ENCODE measurements at regions of chr15 and their contacts with region 1.

Region 1: GRCh38 chr15:51380999-51381795 is 39.7 kb downstream of the GLDN start:
- DNase-seq: peak; percentile 87
- H3K4me3 Mint-ChIP-seq: no peak overlapping the region
- H3K27ac Mint-ChIP-seq: no peak overlapping the region
- H3K4me1 Mint-ChIP-seq: peaks cover 13% of the 10 kb centered on the region
- H3K27me3 Mint-ChIP-seq: no peaks in the 10 kb centered on the region
- CTCF ChIP-seq: peak; percentile 82

Region 2: GRCh38 chr15:50908210-50909009 is 472.8 kb before region 1 on chr15 and contains the start of gene AP4E1:
- CTCF ChIA-PET with region 1: interaction called, 3 read pairs
- POLR2A ChIA-PET with region 1: no interaction called
- intact Hi-C with region 1: loop called (anchors 10 kb)
- DNase-seq: peak; percentile 91
- H3K4me3 Mint-ChIP-seq: peak within 1 kb of the TSS; percentile 81
- H3K27ac Mint-ChIP-seq: peak within 1 kb of the TSS; percentile 81
- H3K4me1 Mint-ChIP-seq: no peaks in the 10 kb centered on the region
- H3K27me3 Mint-ChIP-seq: no peaks in the 10 kb centered on the region
- CTCF ChIP-seq: peak; percentile 97
- total RNA-seq, gene AP4E1: 25.5 and 28.2 TPM in 2 replicates

Region 3: GRCh38 chr15:51203797-51204196 is 177.4 kb before region 1 on chr15:
- CTCF ChIA-PET with region 1: interaction called, 10 read pairs
- POLR2A ChIA-PET with region 1: no interaction called
- intact Hi-C with region 1: no loop called
- DNase-seq: peak; percentile 78
- H3K4me3 Mint-ChIP-seq: no peak overlapping the region
- H3K27ac Mint-ChIP-seq: no peak overlapping the region
- H3K4me1 Mint-ChIP-seq: peaks cover 19% of the 10 kb centered on the region
- H3K27me3 Mint-ChIP-seq: no peaks in the 10 kb centered on the region
- CTCF ChIP-seq: no peak

Region 4: DNA sequence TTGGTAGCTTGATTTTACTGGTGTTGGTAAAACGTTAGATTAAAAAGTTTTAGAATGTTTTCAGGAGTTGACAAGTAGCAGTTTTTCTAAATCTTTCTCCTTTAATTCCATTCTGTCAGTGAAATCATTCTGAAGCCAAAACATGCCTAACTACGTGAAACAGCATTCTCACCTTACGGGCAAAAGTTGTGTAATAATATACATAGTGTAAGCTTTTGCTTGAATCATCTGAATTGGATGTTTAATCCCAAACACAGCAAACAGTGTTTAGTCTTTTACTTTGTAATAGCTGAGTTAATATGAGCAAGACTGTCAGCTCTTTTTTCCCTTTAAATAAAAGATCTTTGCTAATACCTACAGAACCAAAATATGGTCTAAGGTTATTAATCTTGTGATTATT is 143.4 kb before region 1 on chr15:
- CTCF ChIA-PET with region 1: interaction called, 10 read pairs
- POLR2A ChIA-PET with region 1: no interaction called
- intact Hi-C with region 1: no loop called
- DNase-seq: peak; percentile 52
- H3K4me3 Mint-ChIP-seq: no peak overlapping the region
- H3K27ac Mint-ChIP-seq: no peak overlapping the region
- H3K4me1 Mint-ChIP-seq: peaks cover 5% of the 10 kb centered on the region
- H3K27me3 Mint-ChIP-seq: no peaks in the 10 kb centered on the region
- CTCF ChIP-seq: no peak

Region 5: GRCh38 chr15:51286791-51287190 is 94.4 kb before region 1 on chr15:
- CTCF ChIA-PET with region 1: interaction called, 60 read pairs
- POLR2A ChIA-PET with region 1: no interaction called
- intact Hi-C with region 1: loop called (anchors 1 kb)
- DNase-seq: peak; percentile 56
- H3K4me3 Mint-ChIP-seq: no peak overlapping the region
- H3K27ac Mint-ChIP-seq: no peak overlapping the region
- H3K4me1 Mint-ChIP-seq: peaks cover 9% of the 10 kb centered on the region
- H3K27me3 Mint-ChIP-seq: no peaks in the 10 kb centered on the region
- CTCF ChIP-seq: no peak

Region 6: GRCh38 chr15:51368751-51369450 is 12.3 kb before region 1 on chr15:
- CTCF ChIA-PET with region 1: interaction called, 16 read pairs
- POLR2A ChIA-PET with region 1: interaction called, 3 read pairs
- intact Hi-C with region 1: no loop called
- DNase-seq: peak; percentile 60
- H3K4me3 Mint-ChIP-seq: no peak overlapping the region
- H3K27ac Mint-ChIP-seq: no peak overlapping the region
- H3K4me1 Mint-ChIP-seq: peaks cover 11% of the 10 kb centered on the region
- H3K27me3 Mint-ChIP-seq: no peaks in the 10 kb centered on the region
- CTCF ChIP-seq: no peak

Region 7: GRCh38 chr15:51499379-51499976 is 118.3 kb after region 1 on chr15:
- CTCF ChIA-PET with region 1: interaction called, 9 read pairs
- POLR2A ChIA-PET with region 1: no interaction called
- intact Hi-C with region 1: loop called (anchors 2 kb)
- DNase-seq: peak; percentile 54
- H3K4me3 Mint-ChIP-seq: no peak overlapping the region
- H3K27ac Mint-ChIP-seq: no peak overlapping the region
- H3K4me1 Mint-ChIP-seq: no peaks in the 10 kb centered on the region
- H3K27me3 Mint-ChIP-seq: no peaks in the 10 kb centered on the region
- CTCF ChIP-seq: peak; percentile 59